Activated B cell treated with CpG ODN at 0.5 μM for 24 hours (primary cell): ENCODE measurements at regions of chr2 and their contacts with region 1.

Region 1: GRCh38 chr2:153519257-153519875 is 40.8 kb upstream of the RPRM start:
- DNase-seq: no peak
- ATAC-seq: no peak
- H3K4me3 Mint-ChIP-seq: no peak overlapping the region
- H3K27ac Mint-ChIP-seq: no peak overlapping the region
- H3K4me1 Mint-ChIP-seq: no peaks in the 10 kb centered on the region
- H3K27me3 Mint-ChIP-seq: no peaks in the 10 kb centered on the region
- CTCF ChIP-seq: no peak

Region 2: GRCh38 chr2:152755029-152755428 is 764.3 kb before region 1 on chr2:
- CTCF ChIA-PET with region 1: no interaction called
- POLR2A ChIA-PET with region 1: no interaction called
- intact Hi-C with region 1: loop called (anchors 2 kb)
- DNase-seq: no peak
- ATAC-seq: peak; percentile 18
- H3K4me3 Mint-ChIP-seq: no peak overlapping the region
- H3K27ac Mint-ChIP-seq: no peak overlapping the region
- H3K4me1 Mint-ChIP-seq: peaks cover 2% of the 10 kb centered on the region
- H3K27me3 Mint-ChIP-seq: no peaks in the 10 kb centered on the region
- CTCF ChIP-seq: no peak

Region 3: DNA sequence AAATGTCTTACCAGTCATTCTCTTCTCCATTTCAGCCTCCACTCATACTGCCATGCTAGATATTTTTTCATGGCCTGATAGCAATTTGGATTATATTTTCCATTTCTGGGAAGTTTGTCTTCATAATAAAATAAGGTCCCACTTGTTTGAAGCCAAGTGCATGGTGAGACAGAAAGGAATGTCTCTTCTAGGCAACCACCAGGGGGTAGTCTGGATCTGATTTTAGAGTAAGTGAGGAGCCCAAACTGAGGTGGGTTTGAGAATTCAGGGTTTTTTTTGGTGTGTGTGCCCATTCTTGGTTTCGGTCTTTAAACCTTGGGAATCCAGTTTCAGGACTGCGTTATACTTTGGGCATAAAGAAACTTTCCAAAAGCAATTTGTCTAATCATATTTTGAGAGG is 356.3 kb before region 1 on chr2:
- CTCF ChIA-PET with region 1: no interaction called
- POLR2A ChIA-PET with region 1: no interaction called
- intact Hi-C with region 1: loop called (anchors 2 kb)
- DNase-seq: no peak
- ATAC-seq: no peak
- H3K4me3 Mint-ChIP-seq: no peak overlapping the region
- H3K27ac Mint-ChIP-seq: no peak overlapping the region
- H3K4me1 Mint-ChIP-seq: no peaks in the 10 kb centered on the region
- H3K27me3 Mint-ChIP-seq: no peaks in the 10 kb centered on the region
- CTCF ChIP-seq: no peak